Activated CD4-positive, alpha-beta memory T cell treated with anti-CD3 and anti-CD28 coated beads for 36 hours (primary cell): ENCODE measurements at regions of chr22 and their contacts with region 1.

Region 1: DNA sequence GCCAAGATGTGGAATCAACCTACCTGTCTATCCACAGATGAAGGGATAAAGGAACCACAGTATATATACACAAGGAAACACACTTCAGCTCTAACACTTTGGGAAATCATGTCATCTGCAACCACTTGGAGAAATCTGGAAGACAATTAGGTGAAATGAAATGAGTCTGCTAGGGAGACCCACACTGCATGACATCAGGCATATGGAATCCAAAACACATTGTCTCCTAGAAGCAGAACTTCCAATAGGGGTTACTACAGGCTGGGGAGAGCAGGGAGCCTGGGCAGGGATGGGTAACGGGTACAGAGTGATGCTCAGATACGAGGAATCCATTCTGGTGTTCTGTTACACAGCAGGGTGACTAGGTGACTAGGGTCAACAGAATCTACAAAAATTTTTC is 18.3 kb downstream of the RGL4 start:
- DNase-seq: no peak
- H3K4me3 Mint-ChIP-seq: no peak overlapping the region
- H3K27ac Mint-ChIP-seq: no peak overlapping the region
- H3K4me1 Mint-ChIP-seq: peaks cover 53% of the 10 kb centered on the region
- H3K27me3 Mint-ChIP-seq: no peaks in the 10 kb centered on the region

Region 2: GRCh38 chr22:23012081-23012622 is 697.0 kb before region 1 on chr22:
- CTCF ChIA-PET with region 1: no interaction called
- POLR2A ChIA-PET with region 1: no interaction called
- intact Hi-C with region 1: loop called (anchors 10 kb)
- DNase-seq: peak; percentile 65
- H3K4me3 Mint-ChIP-seq: no peak overlapping the region
- H3K27ac Mint-ChIP-seq: peak overlapping the region; percentile 68
- H3K4me1 Mint-ChIP-seq: peaks cover 15% of the 10 kb centered on the region
- H3K27me3 Mint-ChIP-seq: peaks cover 37% of the 10 kb centered on the region

Region 3: DNA sequence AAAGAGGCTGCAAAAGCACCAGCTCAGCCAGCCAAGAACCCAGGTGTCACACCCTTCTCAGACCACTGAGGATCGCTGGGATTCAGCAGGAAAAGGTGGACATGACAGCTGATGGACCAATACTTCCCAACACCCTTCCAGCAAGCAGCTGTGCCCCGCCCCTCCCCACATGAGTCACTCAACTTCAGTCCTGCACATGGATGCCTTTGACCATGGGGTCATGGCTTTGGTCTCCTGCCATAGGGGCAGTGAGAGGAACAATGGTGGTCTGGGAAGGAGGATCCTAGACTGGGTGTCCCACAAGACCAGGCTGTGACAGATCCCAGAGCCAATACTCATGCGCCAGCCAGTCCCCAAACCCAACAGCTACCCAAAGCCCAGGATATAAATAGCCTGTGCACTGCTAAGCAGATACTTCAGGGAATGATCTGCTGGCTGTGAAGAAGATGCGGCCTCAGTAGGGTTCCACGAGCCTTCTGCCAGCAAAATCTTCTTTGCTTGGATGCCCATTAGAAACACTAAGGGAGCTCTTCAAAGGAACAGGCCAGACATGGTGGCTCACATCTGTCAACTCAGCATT is 23.8 kb before region 1 on chr22:
- CTCF ChIA-PET with region 1: no interaction called
- POLR2A ChIA-PET with region 1: no interaction called
- intact Hi-C with region 1: no loop called
- DNase-seq: no peak
- H3K4me3 Mint-ChIP-seq: no peak overlapping the region
- H3K27ac Mint-ChIP-seq: no peak overlapping the region
- H3K4me1 Mint-ChIP-seq: no peaks in the 10 kb centered on the region
- H3K27me3 Mint-ChIP-seq: no peaks in the 10 kb centered on the region

Region 4: GRCh38 chr22:23696326-23696851 is 12.7 kb before region 1 on chr22:
- CTCF ChIA-PET with region 1: no interaction called
- POLR2A ChIA-PET with region 1: interaction called, 5 read pairs
- intact Hi-C with region 1: loop called (anchors 1 kb)
- DNase-seq: peak; percentile 90
- H3K4me3 Mint-ChIP-seq: peak overlapping the region; percentile 85
- H3K27ac Mint-ChIP-seq: peak overlapping the region; percentile 96
- H3K4me1 Mint-ChIP-seq: peaks cover 51% of the 10 kb centered on the region
- H3K27me3 Mint-ChIP-seq: no peaks in the 10 kb centered on the region

Region 5: GRCh38 chr22:23767673-23768548 is 58.8 kb after region 1 on chr22 and contains the start of gene CHCHD10:
- CTCF ChIA-PET with region 1: no interaction called
- POLR2A ChIA-PET with region 1: no interaction called
- intact Hi-C with region 1: loop called (anchors 10 kb)
- DNase-seq: peak; percentile 84
- H3K4me3 Mint-ChIP-seq: peak within 1 kb of the TSS; percentile 76
- H3K27ac Mint-ChIP-seq: peak within 1 kb of the TSS; percentile 42
- H3K4me1 Mint-ChIP-seq: peaks cover 40% of the 10 kb centered on the region
- H3K27me3 Mint-ChIP-seq: no peaks in the 10 kb centered on the region
- total RNA-seq, gene CHCHD10: 144 to 157 TPM

Region 6: GRCh38 chr22:23849009-23850006 is 140.2 kb after region 1 on chr22:
- CTCF ChIA-PET with region 1: no interaction called
- POLR2A ChIA-PET with region 1: no interaction called
- intact Hi-C with region 1: loop called (anchors 10 kb)
- DNase-seq: peak; percentile 91
- H3K4me3 Mint-ChIP-seq: no peak overlapping the region
- H3K27ac Mint-ChIP-seq: no peak overlapping the region
- H3K4me1 Mint-ChIP-seq: peaks cover 7% of the 10 kb centered on the region
- H3K27me3 Mint-ChIP-seq: peaks cover 2% of the 10 kb centered on the region